Kidney (tissue), 22 donors: ENCODE measurements at regions of chr3 and their contacts with region 1.

Region 1: DNA sequence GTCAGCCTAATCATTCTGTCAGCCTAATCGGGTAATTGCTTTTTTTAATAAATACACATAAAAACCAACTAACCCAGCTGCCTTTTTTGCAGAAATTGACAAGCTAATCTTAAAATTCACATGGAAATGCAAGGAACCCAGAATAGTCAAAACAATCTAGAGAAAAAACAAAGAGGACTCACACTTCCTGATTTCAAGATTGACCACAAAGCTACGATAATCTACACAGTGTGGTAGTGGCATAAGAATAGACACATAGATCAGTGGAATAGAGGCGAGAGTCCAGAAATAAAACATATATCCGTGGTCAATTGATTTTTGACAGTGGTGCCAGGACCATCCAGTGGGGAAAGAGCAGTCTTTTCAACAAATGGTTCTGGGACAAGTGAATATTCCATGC is 2.4 kb upstream of the C3orf20 start:
- DNase-seq: no peak
- H3K4me3 ChIP-seq: no peak overlapping the region
- H3K27ac ChIP-seq: no peak overlapping the region
- H3K4me1 ChIP-seq: no peaks in the 10 kb centered on the region
- H3K27me3 ChIP-seq: no peaks in the 10 kb centered on the region
- CTCF ChIP-seq: no peak

Region 2: DNA sequence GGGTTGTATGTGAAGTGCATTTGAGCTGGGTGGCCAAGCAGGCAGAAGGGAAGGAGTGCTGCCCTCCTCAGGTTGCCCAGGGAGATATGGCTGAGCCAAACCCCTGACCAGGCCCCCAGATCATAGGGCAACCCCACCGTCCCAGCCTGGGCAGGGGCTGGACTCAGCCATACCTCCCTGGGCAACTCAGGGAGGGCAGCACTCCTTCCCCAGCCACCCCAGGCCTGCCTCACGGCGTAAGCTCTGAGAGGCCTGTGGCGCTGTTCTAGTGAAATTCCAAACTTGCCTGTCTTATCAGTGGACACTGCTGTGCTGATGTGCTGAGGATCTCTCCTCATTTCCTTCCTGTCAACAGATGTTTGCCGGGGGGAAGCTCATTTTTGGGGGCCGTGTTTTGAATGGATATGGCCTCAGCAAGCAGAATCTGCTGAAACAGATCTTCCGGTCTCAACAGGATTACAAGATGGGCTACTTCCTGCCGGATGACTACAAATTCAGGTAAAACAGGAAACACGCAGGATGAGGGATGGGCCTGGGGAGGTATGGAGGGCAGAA is 88.6 kb after region 1 on chr3:
- intact Hi-C with region 1: no loop called
- DNase-seq: peak in 1 of 5 donors; percentile 50
- H3K4me3 ChIP-seq: no peak overlapping the region
- H3K27ac ChIP-seq: no peak overlapping the region
- H3K4me1 ChIP-seq: no peaks in the 10 kb centered on the region
- H3K27me3 ChIP-seq: no peaks in the 10 kb centered on the region
- CTCF ChIP-seq: no peak

Region 3: GRCh38 chr3:14879211-14879874 is 206.8 kb after region 1 on chr3:
- intact Hi-C with region 1: no loop called
- DNase-seq: peak in 4 of 5 donors; percentile 56 to 81 (median 64)
- H3K4me3 ChIP-seq: no peak overlapping the region
- H3K27ac ChIP-seq: no peak overlapping the region
- H3K4me1 ChIP-seq: peaks cover 0 to 10% (median 9%) of the 10 kb centered on the region in 3 donors
- H3K27me3 ChIP-seq: no peaks in the 10 kb centered on the region
- CTCF ChIP-seq: no peak

Region 4: GRCh38 chr3:14921078-14921616 is 248.6 kb after region 1 on chr3:
- intact Hi-C with region 1: loop called (anchors 5 kb)
- DNase-seq: peak; percentile 88 to 95 (median 92)
- H3K4me3 ChIP-seq: no peak overlapping the region
- H3K27ac ChIP-seq: no peak overlapping the region
- H3K4me1 ChIP-seq: peaks cover 0 to 7% (median 0%) of the 10 kb centered on the region in 3 donors
- H3K27me3 ChIP-seq: no peaks in the 10 kb centered on the region
- CTCF ChIP-seq: peak; percentile 97